ENCODE measurements at regions of chr19 and their contacts with region 1.

Region 1: GRCh38 chr19:4139614-4140236 is 13.7 kb upstream of the CREB3L3 start:
- DNase-seq: no peak
- H3K4me3 ChIP-seq: no peak overlapping the region
- H3K27ac ChIP-seq: no peak overlapping the region
- H3K4me1 ChIP-seq: peaks cover 0 to 14% (median 10%) of the 10 kb centered on the region in 4 donors
- H3K27me3 ChIP-seq: peaks cover 0 to 16% (median 0%) of the 10 kb centered on the region in 4 donors
- CTCF ChIP-seq: peak; percentile 57 to 84 (median 61)
- EP300 ChIP-seq: no peak
- POLR2A ChIP-seq: no peak

Region 2: GRCh38 chr19:4014541-4015491 is 124.9 kb before region 1 on chr19:
- intact Hi-C with region 1: no loop called
- DNase-seq: no peak
- H3K4me3 ChIP-seq: peak overlapping the region; percentile 20 to 41 (median 34)
- H3K27ac ChIP-seq: peak overlapping the region; percentile 72 to 84 (median 74)
- H3K4me1 ChIP-seq: peaks cover 62 to 92% (median 88%) of the 10 kb centered on the region in 4 donors
- H3K27me3 ChIP-seq: no peaks in the 10 kb centered on the region
- CTCF ChIP-seq: no peak
- EP300 ChIP-seq: no peak
- POLR2A ChIP-seq: no peak

Region 3: GRCh38 chr19:4182084-4182810 is 42.5 kb after region 1 on chr19 and contains the starts of genes ANKRD24 and SIRT6:
- intact Hi-C with region 1: no loop called
- DNase-seq: peak; percentile 98
- H3K4me3 ChIP-seq: peak within 1 kb of the TSS; percentile 75 to 84 (median 78)
- H3K27ac ChIP-seq: peak within 1 kb of the TSS; percentile 74 to 81 (median 79)
- H3K4me1 ChIP-seq: peaks cover 15 to 30% (median 25%) of the 10 kb centered on the region in 4 donors
- H3K27me3 ChIP-seq: peaks cover 0 to 18% (median 0%) of the 10 kb centered on the region in 4 donors
- CTCF ChIP-seq: peak in 1 of 3 experiments; percentile 38
- EP300 ChIP-seq: no peak
- POLR2A ChIP-seq: peak; percentile 29
- total RNA-seq, gene ANKRD24: 0.32 to 2.5 (median 0.96) TPM
- total RNA-seq, gene SIRT6: 16.0 to 24.1 (median 19.9) TPM

Region 4: GRCh38 chr19:4194353-4194752 is 54.6 kb after region 1 on chr19:
- intact Hi-C with region 1: no loop called
- DNase-seq: no peak
- H3K4me3 ChIP-seq: no peak overlapping the region
- H3K27ac ChIP-seq: no peak overlapping the region
- H3K4me1 ChIP-seq: peaks cover 0 to 9% (median 9%) of the 10 kb centered on the region in 4 donors
- H3K27me3 ChIP-seq: peaks cover 3 to 87% (median 38%) of the 10 kb centered on the region in 4 donors
- CTCF ChIP-seq: no peak
- EP300 ChIP-seq: no peak
- POLR2A ChIP-seq: no peak

Region 5: DNA sequence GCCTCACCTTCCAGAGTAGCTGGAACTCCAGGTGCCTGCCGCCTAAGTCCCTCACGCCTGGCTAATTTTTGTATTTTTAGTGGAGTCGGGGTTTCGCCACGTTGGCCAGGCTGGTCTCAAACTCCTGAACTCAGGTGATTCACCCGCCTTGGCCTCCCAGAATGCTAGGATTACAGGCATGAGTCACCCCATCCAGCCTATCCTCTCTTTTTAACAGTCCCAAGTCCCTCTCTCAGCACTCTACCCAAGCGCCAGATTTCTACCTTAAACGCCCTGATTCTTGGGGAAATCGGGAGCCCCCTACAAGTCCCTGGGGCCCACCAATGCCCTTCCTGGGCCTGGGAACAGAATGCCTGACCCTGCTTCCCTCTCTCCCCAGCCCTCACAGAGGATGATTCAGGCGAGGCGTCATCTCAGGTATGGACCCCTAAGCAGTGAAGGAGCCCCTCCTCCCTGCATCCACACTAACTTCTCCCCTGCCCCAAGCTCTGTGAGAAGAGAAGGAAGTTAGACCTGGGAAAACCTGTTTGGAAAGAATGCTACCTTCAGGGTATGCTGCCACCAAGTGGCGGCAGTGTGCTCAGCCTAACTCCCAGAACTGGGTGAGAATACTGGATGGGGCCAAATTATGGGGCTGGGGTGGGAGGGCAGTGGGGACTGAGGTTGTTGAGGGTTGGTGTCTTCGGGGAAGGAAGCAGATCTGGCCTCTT is 68.8 kb after region 1 on chr19:
- intact Hi-C with region 1: loop called (anchors 5 kb)
- DNase-seq: no peak
- H3K4me3 ChIP-seq: no peak overlapping the region
- H3K27ac ChIP-seq: no peak overlapping the region
- H3K4me1 ChIP-seq: peaks cover 0 to 8% (median 7%) of the 10 kb centered on the region in 4 donors
- H3K27me3 ChIP-seq: peaks cover 0 to 57% (median 0%) of the 10 kb centered on the region in 4 donors
- CTCF ChIP-seq: no peak
- EP300 ChIP-seq: no peak
- POLR2A ChIP-seq: no peak

Region 6: DNA sequence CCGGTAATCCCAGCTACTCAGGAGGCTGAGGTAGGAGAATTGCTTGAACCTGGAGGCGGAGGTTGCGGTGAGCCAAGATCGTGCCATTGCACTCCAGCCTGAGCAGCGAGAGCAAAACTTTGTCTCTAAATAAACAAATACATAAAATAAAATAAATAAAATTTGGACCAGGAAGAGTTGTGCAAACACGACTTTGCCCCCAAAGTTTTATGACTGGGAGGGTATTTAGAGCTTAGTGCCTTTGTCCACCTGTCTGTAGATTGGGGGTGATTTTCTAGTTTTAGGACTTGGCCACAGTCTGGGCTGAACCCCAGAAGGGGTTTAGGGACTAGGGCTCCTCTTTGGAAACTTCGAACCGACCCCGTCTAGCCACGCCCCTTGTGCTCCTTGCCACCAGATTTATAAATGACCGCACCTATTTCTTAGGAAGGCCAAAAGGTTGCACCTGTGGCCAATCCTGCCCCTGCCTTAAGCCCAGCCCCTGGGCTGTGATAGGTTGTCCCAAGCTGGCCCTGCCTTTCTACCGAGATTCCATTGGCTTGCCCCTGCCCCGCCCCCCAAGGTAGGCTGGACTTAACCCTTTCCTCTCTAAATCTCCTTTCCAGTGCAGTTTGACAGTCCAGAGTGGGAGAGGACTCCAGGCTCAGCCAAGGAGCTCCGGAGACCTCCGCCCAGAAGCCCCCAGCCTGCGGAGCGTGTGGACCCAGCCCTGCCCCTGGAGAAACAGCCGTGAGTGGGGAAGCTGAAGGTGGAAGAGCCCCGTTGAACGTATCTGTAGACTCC is 144.6 kb after region 1 on chr19:
- intact Hi-C with region 1: no loop called
- DNase-seq: no peak
- H3K4me3 ChIP-seq: no peak overlapping the region
- H3K27ac ChIP-seq: no peak overlapping the region
- H3K4me1 ChIP-seq: peaks cover 6 to 9% (median 8%) of the 10 kb centered on the region in 4 donors
- H3K27me3 ChIP-seq: peaks cover 4 to 90% (median 23%) of the 10 kb centered on the region in 4 donors
- CTCF ChIP-seq: no peak
- EP300 ChIP-seq: no peak
- POLR2A ChIP-seq: no peak